ENCODE measurements at regions of chr13 and their contacts with region 1.

Region 1: GRCh38 chr13:27353166-27353583 is 71.2 kb upstream of the GTF3A start:
- DNase-seq: peak; percentile 78
- ATAC-seq: peak; percentile 99
- H3K4me3 Mint-ChIP-seq: peak overlapping the region; percentile 64
- H3K27ac Mint-ChIP-seq: peak overlapping the region; percentile 84
- H3K4me1 Mint-ChIP-seq: peaks cover 22% of the 10 kb centered on the region
- H3K27me3 Mint-ChIP-seq: peaks cover 15% of the 10 kb centered on the region

Region 2: GRCh38 chr13:27053902-27054595 is 299.1 kb before region 1 on chr13:
- CTCF ChIA-PET with region 1: no interaction called
- DNase-seq: no peak
- ATAC-seq: no peak
- H3K4me3 Mint-ChIP-seq: no peak overlapping the region
- H3K27ac Mint-ChIP-seq: no peak overlapping the region
- H3K4me1 Mint-ChIP-seq: peaks cover 21% of the 10 kb centered on the region
- H3K27me3 Mint-ChIP-seq: no peaks in the 10 kb centered on the region

Region 3: DNA sequence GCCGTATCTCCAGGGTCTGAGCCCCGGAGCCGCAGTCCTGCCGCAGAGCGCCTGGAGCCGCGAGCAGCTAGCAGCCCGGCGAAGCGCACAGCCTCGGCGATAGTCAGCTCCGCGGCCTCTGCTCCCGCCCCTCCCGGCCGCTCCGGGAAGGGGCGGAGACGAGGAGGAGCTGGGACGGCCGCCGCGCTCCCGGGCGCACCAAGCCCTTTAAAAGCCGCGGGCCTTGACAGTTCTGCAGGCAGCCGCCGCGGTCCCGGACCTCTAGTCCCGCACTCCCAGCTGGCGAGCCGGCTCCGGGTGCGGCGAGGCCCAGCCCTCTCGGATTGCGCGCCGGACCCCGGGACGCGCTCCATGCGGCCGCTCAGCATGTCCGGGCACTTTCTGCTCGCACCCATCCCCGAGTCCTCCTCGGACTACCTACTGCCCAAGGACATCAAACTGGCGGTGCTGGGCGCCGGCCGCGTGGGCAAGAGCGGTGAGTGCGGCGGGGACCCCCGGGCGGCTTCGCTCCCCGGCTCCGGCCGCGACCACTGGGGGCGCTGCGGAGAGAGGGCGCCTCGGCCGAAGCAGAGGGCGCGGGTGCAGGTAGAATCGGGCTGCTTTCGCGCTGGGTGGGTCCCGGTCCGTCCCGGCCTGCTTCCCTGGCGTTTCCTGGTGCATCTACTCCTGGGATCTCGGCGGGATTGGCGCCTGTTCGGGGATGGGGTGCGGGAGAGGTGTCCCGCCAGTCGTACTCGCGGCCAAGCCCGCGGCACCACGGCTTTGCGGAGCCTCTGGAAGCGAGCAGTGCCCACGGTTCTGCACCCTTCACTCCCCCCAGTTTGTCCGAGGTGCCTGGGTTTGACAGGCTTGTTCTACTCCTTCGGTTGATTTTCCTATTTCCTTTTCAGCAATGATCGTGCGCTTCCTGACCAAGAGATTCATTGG is 82.3 kb before region 1 on chr13 and contains the start of gene RASL11A:
- CTCF ChIA-PET with region 1: interaction called, 11 read pairs
- DNase-seq: peak; percentile 73
- ATAC-seq: peak; percentile 94
- H3K4me3 Mint-ChIP-seq: peak within 1 kb of the TSS; percentile 80
- H3K27ac Mint-ChIP-seq: no peak within 1 kb of the TSS
- H3K4me1 Mint-ChIP-seq: peaks cover 6% of the 10 kb centered on the region
- H3K27me3 Mint-ChIP-seq: peaks cover 39% of the 10 kb centered on the region
- total RNA-seq, gene RASL11A: 0.70 to 0.91 TPM

Measured in activated CD8-positive, alpha-beta memory T cell treated with anti-CD3 and anti-CD28 coated beads, Interleukin-2, amount 10 ng/mL, durations not matched to agents 7 days and 5 days (primary cell).